ENCODE measurements at regions of chr11 and their contacts with region 1.

Region 1: DNA sequence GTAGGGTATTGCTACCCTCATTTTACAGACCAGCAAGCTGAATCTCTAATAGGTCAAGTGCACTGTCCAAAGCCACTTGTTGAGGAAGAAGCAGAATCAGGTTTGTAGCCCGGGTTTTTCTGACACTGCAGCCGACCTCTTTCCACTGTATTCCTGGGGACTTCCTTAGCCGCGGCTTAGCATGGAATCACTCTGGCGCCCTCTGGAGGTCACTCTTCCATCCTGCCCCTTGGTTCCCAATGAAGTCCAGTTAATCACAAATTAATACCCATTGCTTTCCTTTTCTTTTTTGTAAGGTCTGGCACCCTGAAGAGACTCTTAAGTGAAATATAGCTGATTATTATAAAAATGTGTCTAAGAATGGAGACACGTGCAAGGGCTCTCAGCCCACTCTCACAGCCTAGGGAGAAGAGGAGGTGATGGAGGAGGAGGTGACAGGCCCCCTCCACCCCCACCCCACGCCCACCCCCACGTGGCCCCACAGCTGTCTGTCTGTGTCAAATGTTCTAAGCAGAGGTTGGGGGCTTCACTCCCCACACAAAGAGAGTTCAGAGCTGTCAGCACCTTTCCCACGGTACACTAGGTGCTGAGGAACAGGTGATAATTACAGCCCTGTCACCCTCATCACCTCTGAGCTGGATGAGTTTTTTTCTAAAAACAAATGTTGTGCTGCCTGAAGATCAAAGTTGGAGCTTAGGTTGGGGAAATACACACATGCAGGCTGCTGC is 57.7 kb upstream of the DRD2 start:
- DNase-seq: peak in 1 of 2 donors; percentile 67
- H3K4me3 ChIP-seq: no peak overlapping the region
- H3K27ac ChIP-seq: no peak overlapping the region
- H3K4me1 ChIP-seq: peaks cover 10% of the 10 kb centered on the region
- H3K27me3 ChIP-seq: no peaks in the 10 kb centered on the region
- CTCF ChIP-seq: peak; percentile 27 to 76 (median 69)
- POLR2A ChIP-seq: no peak

Region 2: GRCh38 chr11:113308566-113308965 is 224.3 kb before region 1 on chr11:
- intact Hi-C with region 1: loop called (anchors 2 kb)
- DNase-seq: no peak
- H3K4me3 ChIP-seq: no peak overlapping the region
- H3K27ac ChIP-seq: no peak overlapping the region
- H3K4me1 ChIP-seq: peaks cover under 1% of the 10 kb centered on the region
- H3K27me3 ChIP-seq: no peaks in the 10 kb centered on the region
- CTCF ChIP-seq: no peak
- POLR2A ChIP-seq: no peak

Region 3: DNA sequence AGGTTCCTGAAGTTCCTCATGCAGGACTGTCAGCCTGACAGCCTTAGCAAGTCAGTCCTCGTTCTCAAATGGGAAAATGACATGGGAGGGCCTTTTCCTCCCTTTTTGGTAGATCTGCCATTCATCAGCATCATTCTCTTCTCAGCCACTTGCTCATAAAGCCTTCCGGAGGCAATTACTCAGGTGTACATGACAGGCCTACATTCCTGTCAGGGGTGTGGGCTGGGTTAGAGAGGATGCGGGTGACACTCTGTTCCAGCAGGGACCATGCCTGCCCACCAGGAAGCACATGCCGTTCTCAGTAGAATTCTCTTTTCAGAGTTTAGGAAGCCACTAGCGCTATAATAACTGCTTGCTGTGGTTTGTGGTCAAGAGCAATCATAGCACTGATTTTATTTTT is 169.5 kb before region 1 on chr11:
- intact Hi-C with region 1: no loop called
- DNase-seq: peak in 1 of 2 donors; percentile 58
- H3K4me3 ChIP-seq: no peak overlapping the region
- H3K27ac ChIP-seq: no peak overlapping the region
- H3K4me1 ChIP-seq: no peaks in the 10 kb centered on the region
- H3K27me3 ChIP-seq: no peaks in the 10 kb centered on the region
- CTCF ChIP-seq: no peak
- POLR2A ChIP-seq: no peak

Region 4: GRCh38 chr11:113644605-113645004 is 111.7 kb after region 1 on chr11:
- intact Hi-C with region 1: no loop called
- DNase-seq: no peak
- H3K4me3 ChIP-seq: no peak overlapping the region
- H3K27ac ChIP-seq: no peak overlapping the region
- H3K4me1 ChIP-seq: no peaks in the 10 kb centered on the region
- H3K27me3 ChIP-seq: no peaks in the 10 kb centered on the region
- CTCF ChIP-seq: no peak
- POLR2A ChIP-seq: no peak

Measured in vagina (tissue), 2 donors.